ENCODE measurements at regions of chr11 and their contacts with region 1.

Region 1: DNA sequence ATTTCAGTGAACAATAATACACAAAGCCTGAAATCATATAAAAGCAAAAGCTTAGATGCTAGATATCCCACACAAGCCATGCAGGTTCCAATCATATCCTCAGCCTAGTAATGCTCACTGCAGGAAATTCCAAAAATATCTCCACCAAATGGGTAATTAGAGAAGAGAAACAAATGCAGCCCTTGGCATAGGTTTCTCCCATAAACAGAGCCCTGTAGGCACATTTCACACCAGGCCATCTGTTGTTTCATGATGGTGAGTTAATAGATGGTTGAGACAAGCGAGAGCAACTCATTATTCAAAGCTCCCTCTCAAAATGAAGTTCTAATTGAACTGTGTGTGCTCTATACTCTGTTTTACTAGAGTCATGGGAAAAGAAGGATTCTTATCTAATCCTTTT is 154.6 kb upstream of the TRPC6 start:
- DNase-seq: no peak
- ATAC-seq: no peak
- H3K4me3 ChIP-seq: no peak overlapping the region
- H3K27ac ChIP-seq: no peak overlapping the region
- H3K4me1 ChIP-seq: no peaks in the 10 kb centered on the region
- H3K27me3 ChIP-seq: no peaks in the 10 kb centered on the region
- CTCF ChIP-seq: no peak

Region 2: GRCh38 chr11:101049123-101049522 is 689.3 kb before region 1 on chr11:
- CTCF ChIA-PET with region 1: no interaction called
- POLR2A ChIA-PET with region 1: no interaction called
- in situ Hi-C with region 1: no loop called
- intact Hi-C with region 1: loop called (anchors 5 kb)
- DNase-seq: no peak
- ATAC-seq: no peak
- H3K4me3 ChIP-seq: no peak overlapping the region
- H3K27ac ChIP-seq: no peak overlapping the region
- H3K4me1 ChIP-seq: no peaks in the 10 kb centered on the region
- H3K27me3 ChIP-seq: no peaks in the 10 kb centered on the region
- CTCF ChIP-seq: no peak

Region 3: GRCh38 chr11:101974255-101974654 is 235.8 kb after region 1 on chr11:
- CTCF ChIA-PET with region 1: no interaction called
- POLR2A ChIA-PET with region 1: no interaction called
- in situ Hi-C with region 1: no loop called
- intact Hi-C with region 1: no loop called
- DNase-seq: peak; percentile 4
- ATAC-seq: peak; percentile 87
- H3K4me3 ChIP-seq: no peak overlapping the region
- H3K27ac ChIP-seq: no peak overlapping the region; the same call in 1 of the 2 replicates
- H3K4me1 ChIP-seq: peaks cover 3% of the 10 kb centered on the region; the same call in 1 of the 2 replicates
- H3K27me3 ChIP-seq: no peaks in the 10 kb centered on the region
- CTCF ChIP-seq: peak; percentile 59; the same call in 1 of the 2 replicates

Region 4: GRCh38 chr11:102991776-102992175 is 1253.3 kb after region 1 on chr11:
- CTCF ChIA-PET with region 1: no interaction called
- POLR2A ChIA-PET with region 1: interaction called, 11 read pairs
- in situ Hi-C with region 1: no loop called
- intact Hi-C with region 1: no loop called
- DNase-seq: no peak
- ATAC-seq: no peak
- H3K4me3 ChIP-seq: no peak overlapping the region
- H3K27ac ChIP-seq: no peak overlapping the region
- H3K4me1 ChIP-seq: no peaks in the 10 kb centered on the region
- H3K27me3 ChIP-seq: peaks cover 3% of the 10 kb centered on the region; the same call in 1 of the 2 replicates
- CTCF ChIP-seq: no peak